CD4-positive, alpha-beta memory T cell (primary cell): ENCODE measurements at regions of chr3 and their contacts with region 1.

Region 1: GRCh38 chr3:183555541-183556081 is at the start of gene KLHL6:
- DNase-seq: peak; percentile 60 to 83 (median 69)
- H3K4me3 ChIP-seq: peak within 1 kb of the TSS; percentile 68 to 70
- H3K4me3 Mint-ChIP-seq: peak within 1 kb of the TSS; percentile 97 to 100 (median 99)
- H3K27ac ChIP-seq: peak within 1 kb of the TSS; percentile 80
- H3K27ac Mint-ChIP-seq: peak within 1 kb of the TSS; percentile 96 to 99 (median 98)
- H3K4me1 ChIP-seq: peaks cover 47% of the 10 kb centered on the region
- H3K4me1 Mint-ChIP-seq: peaks cover 34 to 58% (median 46%) of the 10 kb centered on the region in 4 donors
- H3K27me3 ChIP-seq: no peaks in the 10 kb centered on the region
- H3K27me3 Mint-ChIP-seq: no peaks in the 10 kb centered on the region
- total RNA-seq, gene KLHL6: 55.9 to 56.1 TPM

Region 2: DNA sequence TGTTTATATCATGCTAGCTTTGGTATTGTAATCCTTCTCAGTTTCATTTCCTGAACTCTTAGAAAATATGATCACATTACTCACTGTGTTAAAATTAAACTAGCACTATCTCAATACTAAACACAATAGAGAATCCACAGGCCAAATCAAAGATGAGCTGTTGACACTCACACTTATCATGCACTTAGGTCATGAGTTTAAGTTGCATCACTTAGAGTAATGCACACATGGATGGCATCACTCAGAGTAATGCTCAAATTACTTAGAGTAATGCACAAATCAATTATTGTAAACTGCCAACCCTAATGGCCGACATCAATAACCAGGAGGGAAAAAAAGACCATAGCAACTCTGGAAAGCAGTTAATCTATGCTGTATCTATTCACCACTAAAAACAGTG is 87.2 kb before region 1 on chr3:
- CTCF ChIA-PET with region 1: interaction called, 8 read pairs
- POLR2A ChIA-PET with region 1: interaction called, 3 read pairs
- intact Hi-C with region 1: loop called (anchors 1 kb)
- DNase-seq: no peak
- H3K4me3 ChIP-seq: no peak overlapping the region
- H3K4me3 Mint-ChIP-seq: no peak overlapping the region
- H3K27ac ChIP-seq: no peak overlapping the region
- H3K27ac Mint-ChIP-seq: no peak overlapping the region
- H3K4me1 ChIP-seq: peaks cover 7% of the 10 kb centered on the region
- H3K4me1 Mint-ChIP-seq: peaks cover 2 to 6% (median 6%) of the 10 kb centered on the region in 4 donors
- H3K27me3 ChIP-seq: no peaks in the 10 kb centered on the region
- H3K27me3 Mint-ChIP-seq: no peaks in the 10 kb centered on the region

Region 3: GRCh38 chr3:183515968-183516851 is 39.4 kb before region 1 on chr3:
- CTCF ChIA-PET with region 1: interaction called, 3 read pairs
- POLR2A ChIA-PET with region 1: interaction called, 13 read pairs
- intact Hi-C with region 1: loop called (anchors 1 kb)
- DNase-seq: peak; percentile 64 to 91 (median 68)
- H3K4me3 ChIP-seq: no peak overlapping the region
- H3K4me3 Mint-ChIP-seq: peak overlapping the region; percentile 7 to 70 (median 57)
- H3K27ac ChIP-seq: peak overlapping the region; percentile 42
- H3K27ac Mint-ChIP-seq: peak overlapping the region; percentile 90 to 95 (median 92)
- H3K4me1 ChIP-seq: peaks cover 66% of the 10 kb centered on the region
- H3K4me1 Mint-ChIP-seq: peaks cover 58 to 80% (median 71%) of the 10 kb centered on the region in 4 donors
- H3K27me3 ChIP-seq: no peaks in the 10 kb centered on the region
- H3K27me3 Mint-ChIP-seq: no peaks in the 10 kb centered on the region

Region 4: GRCh38 chr3:183584246-183584913 is 28.8 kb after region 1 on chr3:
- CTCF ChIA-PET with region 1: interaction called, 6 read pairs
- POLR2A ChIA-PET with region 1: interaction called, 4 read pairs
- intact Hi-C with region 1: loop called (anchors 2 kb)
- DNase-seq: no peak
- H3K4me3 ChIP-seq: no peak overlapping the region
- H3K4me3 Mint-ChIP-seq: peak overlapping the region in 1 of 8 donors; percentile 18
- H3K27ac ChIP-seq: no peak overlapping the region
- H3K27ac Mint-ChIP-seq: peak overlapping the region in 5 of 7 donors; percentile 9 to 57 (median 39)
- H3K4me1 ChIP-seq: peaks cover 46% of the 10 kb centered on the region
- H3K4me1 Mint-ChIP-seq: peaks cover 24 to 64% (median 54%) of the 10 kb centered on the region in 4 donors
- H3K27me3 ChIP-seq: no peaks in the 10 kb centered on the region
- H3K27me3 Mint-ChIP-seq: no peaks in the 10 kb centered on the region

Region 5: DNA sequence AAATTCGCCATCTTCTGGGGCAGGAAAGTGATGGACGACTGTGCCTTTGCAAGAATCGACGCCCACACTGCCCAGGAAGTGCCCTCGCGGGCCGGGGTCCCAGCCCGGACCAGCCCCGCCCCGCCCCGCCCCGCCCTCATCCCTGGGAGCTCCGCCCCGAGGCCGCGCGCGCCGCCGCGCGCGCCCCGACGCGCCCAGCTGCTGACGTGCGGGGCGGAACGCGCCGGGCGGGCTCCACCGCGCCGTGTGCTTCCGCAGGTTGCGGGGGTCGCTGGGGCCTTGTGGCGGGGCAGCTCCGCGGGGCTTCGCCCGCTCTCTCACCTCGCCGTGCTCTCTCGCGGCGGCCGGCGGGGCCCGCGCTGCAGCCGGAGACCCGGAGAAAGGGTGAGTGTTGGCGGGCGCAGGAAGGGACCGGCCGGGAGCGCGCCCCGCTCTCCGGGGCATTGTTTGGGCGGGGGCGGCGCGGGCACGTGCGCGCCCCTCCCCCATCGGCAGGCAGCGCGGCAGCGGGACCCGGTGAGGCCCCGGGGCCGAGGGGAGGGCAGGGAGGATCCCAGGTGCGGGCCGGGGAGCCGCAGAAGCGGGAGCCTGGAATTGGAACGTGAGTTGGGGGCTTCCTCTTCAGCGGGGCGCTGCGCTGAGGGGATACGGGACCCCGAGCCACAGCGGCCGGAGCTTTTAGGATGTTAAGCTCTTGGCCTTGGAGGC is 142.2 kb after region 1 on chr3 and contains the start of gene YEATS2:
- CTCF ChIA-PET with region 1: no interaction called
- POLR2A ChIA-PET with region 1: no interaction called
- intact Hi-C with region 1: loop called (anchors 2 kb)
- DNase-seq: peak; percentile 65 to 79 (median 74)
- H3K4me3 ChIP-seq: peak within 1 kb of the TSS; percentile 83 to 84
- H3K4me3 Mint-ChIP-seq: peak within 1 kb of the TSS; percentile 87 to 99 (median 98)
- H3K27ac ChIP-seq: peak within 1 kb of the TSS; percentile 78
- H3K27ac Mint-ChIP-seq: peak within 1 kb of the TSS; percentile 79 to 99 (median 97)
- H3K4me1 ChIP-seq: peaks cover 24% of the 10 kb centered on the region
- H3K4me1 Mint-ChIP-seq: peaks cover 28 to 42% (median 36%) of the 10 kb centered on the region in 4 donors
- H3K27me3 ChIP-seq: no peaks in the 10 kb centered on the region
- H3K27me3 Mint-ChIP-seq: no peaks in the 10 kb centered on the region
- total RNA-seq, gene YEATS2: 25.6 to 26.9 TPM

Region 6: DNA sequence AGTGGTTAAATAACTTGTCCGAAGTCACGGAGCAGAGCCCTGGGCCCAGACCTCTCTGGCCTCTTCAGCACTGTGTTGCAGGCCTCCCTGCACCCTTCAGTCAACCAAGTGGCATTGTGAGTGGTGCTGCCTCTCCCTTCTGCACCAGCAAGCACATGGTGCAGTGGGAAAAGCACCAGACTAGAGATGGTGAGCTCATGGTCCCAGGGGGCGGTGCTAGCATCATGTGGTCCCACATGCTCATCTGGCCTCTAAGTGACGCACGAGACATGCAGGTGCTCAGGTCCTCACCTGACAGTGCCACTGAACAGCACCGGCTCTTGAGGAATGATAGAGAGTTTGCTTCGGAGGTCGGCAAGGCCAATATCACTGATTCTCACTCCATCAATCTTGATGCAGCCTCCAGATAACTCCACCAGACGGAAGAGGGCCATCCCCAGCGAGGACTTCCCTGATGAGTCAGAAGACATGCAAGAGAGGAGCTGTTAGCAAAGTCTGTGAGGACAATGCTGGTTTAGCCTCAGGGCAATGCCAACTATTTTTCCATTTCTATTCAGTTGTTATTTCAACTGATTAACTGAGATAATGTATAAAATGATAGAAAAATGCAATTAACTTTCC is 382.1 kb after region 1 on chr3:
- CTCF ChIA-PET with region 1: no interaction called
- POLR2A ChIA-PET with region 1: no interaction called
- intact Hi-C with region 1: no loop called
- DNase-seq: no peak
- H3K4me3 ChIP-seq: no peak overlapping the region
- H3K4me3 Mint-ChIP-seq: no peak overlapping the region
- H3K27ac ChIP-seq: no peak overlapping the region
- H3K27ac Mint-ChIP-seq: no peak overlapping the region
- H3K4me1 ChIP-seq: no peaks in the 10 kb centered on the region
- H3K4me1 Mint-ChIP-seq: no peaks in the 10 kb centered on the region
- H3K27me3 ChIP-seq: no peaks in the 10 kb centered on the region
- H3K27me3 Mint-ChIP-seq: no peaks in the 10 kb centered on the region